AG04450 (cell line): ENCODE measurements at regions of chr16 and their contacts with region 1.

Region 1: GRCh38 chr16:48353565-48354163 is 31.5 kb downstream of the SIAH1 start:
- DNase-seq: peak; percentile 37
- H3K4me3 ChIP-seq: no peak overlapping the region
- H3K27ac ChIP-seq: no peak overlapping the region
- H3K27me3 ChIP-seq: no peaks in the 10 kb centered on the region
- CTCF ChIP-seq: peak; percentile 92

Region 2: DNA sequence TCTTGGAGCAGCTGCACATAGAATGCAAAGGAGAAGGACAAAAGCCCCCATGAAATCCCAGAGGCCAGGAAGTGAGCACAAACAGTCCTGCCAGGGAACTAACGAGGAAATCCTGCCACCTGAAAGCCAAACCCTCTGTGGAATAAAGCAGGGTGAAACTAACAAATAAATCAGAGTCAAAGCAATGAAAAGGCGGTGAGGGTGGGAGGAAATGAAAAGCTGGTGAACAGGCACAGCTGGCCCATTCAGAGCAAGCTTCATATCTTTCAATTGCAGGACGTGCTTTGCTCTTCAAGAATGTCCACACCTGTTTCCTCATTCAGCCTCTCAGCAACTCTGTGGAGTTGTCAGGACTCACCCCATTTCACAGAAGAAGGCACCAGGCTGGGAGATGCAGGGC is 305.9 kb before region 1 on chr16:
- CTCF ChIA-PET with region 1: no interaction called
- POLR2A ChIA-PET with region 1: no interaction called
- DNase-seq: no peak
- H3K4me3 ChIP-seq: no peak overlapping the region
- H3K27ac ChIP-seq: no peak overlapping the region
- H3K27me3 ChIP-seq: peaks cover 5% of the 10 kb centered on the region
- CTCF ChIP-seq: no peak

Region 3: DNA sequence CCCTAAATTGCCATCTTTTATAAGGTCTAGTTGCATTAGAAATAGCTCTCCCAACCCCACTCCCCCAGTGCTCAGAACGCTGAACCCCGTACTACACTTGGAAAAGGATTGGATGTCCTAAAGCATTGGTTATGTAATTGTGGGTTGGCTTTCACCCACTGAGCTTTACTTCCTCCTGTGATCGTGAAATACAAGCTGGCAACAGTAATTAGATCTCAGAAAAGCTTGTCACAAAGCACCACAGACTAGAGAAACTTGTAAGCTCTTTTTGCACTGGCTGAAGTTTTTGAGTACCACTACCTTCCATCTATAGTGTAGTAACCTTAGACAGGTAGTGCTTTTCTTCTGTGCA is 22.8 kb before region 1 on chr16:
- CTCF ChIA-PET with region 1: no interaction called
- POLR2A ChIA-PET with region 1: no interaction called
- DNase-seq: no peak
- H3K4me3 ChIP-seq: no peak overlapping the region
- H3K27ac ChIP-seq: no peak overlapping the region
- H3K27me3 ChIP-seq: no peaks in the 10 kb centered on the region
- CTCF ChIP-seq: no peak

Region 4: DNA sequence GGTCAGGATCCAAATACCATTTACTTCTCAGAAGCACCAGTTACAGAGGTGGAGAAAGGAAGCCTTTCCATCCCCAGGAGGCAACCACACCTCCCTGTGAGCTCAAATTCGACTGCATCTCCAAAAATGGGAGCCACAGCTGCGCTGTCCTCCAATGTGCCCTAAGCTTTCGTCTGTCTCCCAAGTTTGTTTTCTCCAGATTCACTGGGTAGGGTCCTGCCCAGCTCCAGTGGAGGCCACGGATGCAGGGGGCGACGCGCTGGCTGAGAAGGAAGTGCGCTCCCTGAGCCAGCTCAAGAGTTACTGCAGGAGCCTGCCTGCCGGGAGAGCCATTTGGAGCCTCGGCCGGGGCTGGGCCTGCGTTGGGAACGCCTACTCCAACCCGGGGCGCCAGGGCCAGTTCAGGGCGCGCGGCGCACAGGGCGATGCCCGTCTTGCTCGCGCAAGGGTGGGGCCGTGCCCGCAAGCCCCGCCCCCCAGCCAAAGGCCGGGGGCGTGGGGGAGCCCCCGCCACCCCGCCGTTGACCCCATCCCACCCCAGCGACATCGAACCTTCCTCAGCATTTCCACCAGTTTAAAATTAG is 12.0 kb after region 1 on chr16:
- CTCF ChIA-PET with region 1: interaction called, 11 read pairs
- POLR2A ChIA-PET with region 1: interaction called, 3 read pairs
- DNase-seq: no peak
- H3K4me3 ChIP-seq: peak overlapping the region; percentile 63
- H3K27ac ChIP-seq: peak overlapping the region; percentile 95
- H3K27me3 ChIP-seq: no peaks in the 10 kb centered on the region
- CTCF ChIP-seq: peak; percentile 17; the same call in 1 of the 2 replicates

Region 5: GRCh38 chr16:48409839-48410611 is 56.4 kb after region 1 on chr16:
- CTCF ChIA-PET with region 1: no interaction called
- POLR2A ChIA-PET with region 1: no interaction called
- DNase-seq: peak; percentile 69
- H3K4me3 ChIP-seq: no peak overlapping the region
- H3K27ac ChIP-seq: peak overlapping the region; percentile 69
- H3K27me3 ChIP-seq: no peaks in the 10 kb centered on the region
- CTCF ChIP-seq: no peak

Region 6: DNA sequence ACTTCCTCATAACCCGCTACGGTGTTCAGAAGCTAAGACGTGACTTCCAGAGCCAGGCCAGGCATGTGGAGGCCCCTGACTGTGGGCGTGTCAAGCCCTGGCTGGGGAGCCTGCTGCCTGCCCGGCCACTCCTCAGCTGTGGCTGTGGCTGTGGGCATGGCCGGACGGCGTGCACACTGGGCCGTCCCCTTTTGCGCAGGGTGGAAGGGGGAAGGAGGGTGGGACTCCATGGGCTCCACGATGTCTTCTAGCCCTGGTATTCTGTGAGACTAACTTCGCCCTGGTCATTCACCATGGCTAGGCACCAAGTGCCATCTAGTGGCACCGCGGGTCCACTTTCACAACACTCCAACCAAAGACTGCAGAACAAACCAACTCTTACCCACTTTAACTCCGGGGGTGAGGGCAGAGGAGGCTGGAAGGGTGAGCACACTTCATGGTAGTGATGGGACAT is 188.4 kb after region 1 on chr16:
- CTCF ChIA-PET with region 1: interaction called, 15 read pairs
- POLR2A ChIA-PET with region 1: no interaction called
- DNase-seq: no peak
- H3K4me3 ChIP-seq: no peak overlapping the region
- H3K27ac ChIP-seq: no peak overlapping the region
- H3K27me3 ChIP-seq: no peaks in the 10 kb centered on the region
- CTCF ChIP-seq: peak; percentile 66